HepG2 (cell line): ENCODE measurements at regions of chr15 and their contacts with region 1.

Region 1: GRCh38 chr15:39602143-39602542 is 21.3 kb downstream of the THBS1 start:
- DNase-seq: peak; percentile 40
- ATAC-seq: peak; percentile 83
- H3K4me3 ChIP-seq: no peak overlapping the region
- H3K27ac ChIP-seq: no peak overlapping the region
- H3K4me1 ChIP-seq: no peaks in the 10 kb centered on the region
- H3K27me3 ChIP-seq: peaks cover 1 to 5% of the 10 kb centered on the region in 2 experiments; a peak in 2 of 5 replicates
- CTCF ChIP-seq: peak; percentile 65
- EP300 ChIP-seq: no peak
- POLR2A ChIP-seq: no peak
- RAD21 ChIP-seq: no peak

Region 2: GRCh38 chr15:39767921-39768320 is 165.8 kb after region 1 on chr15:
- CTCF ChIA-PET with region 1: no interaction called
- POLR2A ChIA-PET with region 1: no interaction called
- in situ Hi-C with region 1: loop called (anchors 10 kb)
- intact Hi-C with region 1: no loop called
- DNase-seq: no peak
- ATAC-seq: no peak
- H3K4me3 ChIP-seq: no peak overlapping the region
- H3K27ac ChIP-seq: no peak overlapping the region
- H3K4me1 ChIP-seq: no peaks in the 10 kb centered on the region
- H3K27me3 ChIP-seq: peaks cover 0 to 6% of the 10 kb centered on the region in 2 experiments; a peak in 1 of 5 replicates
- CTCF ChIP-seq: no peak
- EP300 ChIP-seq: no peak
- POLR2A ChIP-seq: no peak
- RAD21 ChIP-seq: no peak

Region 3: GRCh38 chr15:40590667-40591050 is 988.5 kb after region 1 on chr15:
- CTCF ChIA-PET with region 1: no interaction called
- POLR2A ChIA-PET with region 1: no interaction called
- in situ Hi-C with region 1: no loop called
- intact Hi-C with region 1: no loop called
- DNase-seq: no peak
- ATAC-seq: no peak
- H3K4me3 ChIP-seq: peak overlapping the region; percentile 60 to 77 (median 70)
- H3K27ac ChIP-seq: no peak overlapping the region
- H3K4me1 ChIP-seq: peaks cover 24% of the 10 kb centered on the region
- H3K27me3 ChIP-seq: no peaks in the 10 kb centered on the region; a peak in 1 of 5 replicates
- CTCF ChIP-seq: no peak
- EP300 ChIP-seq: no peak
- POLR2A ChIP-seq: no peak
- RAD21 ChIP-seq: no peak